ENCODE measurements at regions of chr12 and their contacts with region 1.

Region 1: GRCh38 chr12:27703710-27704452 is 6.8 kb upstream of the MRPS35 start:
- DNase-seq: peak; percentile 80
- H3K4me3 Mint-ChIP-seq: no peak overlapping the region
- H3K27ac Mint-ChIP-seq: no peak overlapping the region
- H3K4me1 Mint-ChIP-seq: peaks cover 2% of the 10 kb centered on the region
- H3K27me3 Mint-ChIP-seq: peaks cover 9% of the 10 kb centered on the region

Region 2: GRCh38 chr12:27383429-27384260 is 320.2 kb before region 1 on chr12:
- CTCF ChIA-PET with region 1: interaction called, 3 read pairs
- POLR2A ChIA-PET with region 1: no interaction called
- intact Hi-C with region 1: loop called (anchors 1 kb)
- DNase-seq: peak; percentile 78
- H3K4me3 Mint-ChIP-seq: no peak overlapping the region
- H3K27ac Mint-ChIP-seq: no peak overlapping the region
- H3K4me1 Mint-ChIP-seq: no peaks in the 10 kb centered on the region
- H3K27me3 Mint-ChIP-seq: no peaks in the 10 kb centered on the region

Region 3: DNA sequence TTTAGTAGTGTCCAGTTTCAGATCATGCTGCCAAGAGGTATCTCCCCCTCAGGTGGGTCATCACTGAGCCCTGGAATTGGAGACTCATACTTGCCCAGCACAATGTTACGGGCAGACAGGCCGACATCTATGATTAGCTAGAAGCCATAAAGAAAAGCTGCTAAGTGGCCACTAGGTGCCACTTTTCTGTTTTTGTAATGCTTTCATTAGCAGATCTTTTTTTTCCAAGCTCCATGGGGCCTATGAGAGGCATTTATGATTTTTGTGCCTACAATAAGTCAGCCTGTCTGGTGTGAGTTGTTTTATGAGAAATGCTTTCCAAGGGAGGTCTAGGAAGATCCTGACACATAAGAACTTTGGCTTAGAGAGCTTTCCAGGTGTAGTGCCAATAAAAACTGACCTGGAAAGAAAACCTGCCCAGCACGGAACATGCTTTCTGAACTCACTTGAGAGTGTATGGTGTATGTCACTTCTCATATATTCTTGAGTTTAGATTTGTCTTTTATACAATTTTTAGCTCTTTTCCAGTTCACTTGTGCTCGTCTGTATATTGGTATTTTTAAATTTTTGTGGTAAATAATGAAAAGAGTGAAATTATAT is 279.1 kb before region 1 on chr12:
- CTCF ChIA-PET with region 1: interaction called, 4 read pairs
- POLR2A ChIA-PET with region 1: no interaction called
- intact Hi-C with region 1: loop called (anchors 5 kb)
- DNase-seq: no peak
- H3K4me3 Mint-ChIP-seq: no peak overlapping the region
- H3K27ac Mint-ChIP-seq: no peak overlapping the region
- H3K4me1 Mint-ChIP-seq: peaks cover 2% of the 10 kb centered on the region
- H3K27me3 Mint-ChIP-seq: peaks cover 2% of the 10 kb centered on the region

Region 4: DNA sequence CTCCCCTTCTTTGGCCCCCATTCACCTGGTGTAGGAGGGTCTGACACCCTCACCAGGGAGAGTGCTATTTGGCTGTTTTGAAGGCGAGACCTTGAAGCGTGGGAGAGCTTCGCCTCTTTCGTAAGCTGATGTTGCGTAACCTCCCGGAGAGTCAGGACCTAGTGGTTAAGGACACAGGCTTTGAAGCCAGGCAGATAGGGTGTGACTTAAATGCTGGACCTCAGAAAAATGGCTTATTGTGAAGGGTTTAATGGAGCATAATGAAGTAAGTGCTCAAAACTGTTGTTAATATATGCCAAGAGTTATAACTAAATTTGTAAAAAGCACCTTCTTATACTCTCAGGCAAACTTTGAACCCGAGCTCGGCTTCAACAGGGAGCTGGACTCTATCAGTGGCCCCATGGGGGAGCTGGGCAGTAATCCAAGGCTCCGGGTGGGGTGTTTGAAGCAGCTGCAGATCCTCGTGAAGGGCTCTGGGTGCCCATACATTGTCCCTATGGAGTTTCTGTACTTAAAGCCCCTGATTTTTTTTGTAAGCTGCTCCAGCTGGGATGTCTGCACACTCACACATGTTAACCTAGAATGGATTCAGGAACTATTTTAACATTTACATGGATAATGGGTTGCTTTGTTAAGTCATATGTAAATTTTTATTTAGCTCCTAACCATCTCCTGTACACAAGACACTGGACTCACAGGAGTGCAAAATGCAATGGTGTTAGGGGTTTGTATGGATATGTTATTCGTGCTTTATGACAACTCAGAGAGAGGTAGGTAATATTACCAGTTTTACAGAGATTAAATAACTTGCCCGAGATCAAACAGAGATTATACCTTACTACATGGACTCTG is 153.9 kb before region 1 on chr12:
- CTCF ChIA-PET with region 1: no interaction called
- POLR2A ChIA-PET with region 1: no interaction called
- intact Hi-C with region 1: no loop called
- DNase-seq: no peak
- H3K4me3 Mint-ChIP-seq: no peak overlapping the region
- H3K27ac Mint-ChIP-seq: no peak overlapping the region
- H3K4me1 Mint-ChIP-seq: peaks cover 7% of the 10 kb centered on the region
- H3K27me3 Mint-ChIP-seq: peaks cover 4% of the 10 kb centered on the region

Region 5: DNA sequence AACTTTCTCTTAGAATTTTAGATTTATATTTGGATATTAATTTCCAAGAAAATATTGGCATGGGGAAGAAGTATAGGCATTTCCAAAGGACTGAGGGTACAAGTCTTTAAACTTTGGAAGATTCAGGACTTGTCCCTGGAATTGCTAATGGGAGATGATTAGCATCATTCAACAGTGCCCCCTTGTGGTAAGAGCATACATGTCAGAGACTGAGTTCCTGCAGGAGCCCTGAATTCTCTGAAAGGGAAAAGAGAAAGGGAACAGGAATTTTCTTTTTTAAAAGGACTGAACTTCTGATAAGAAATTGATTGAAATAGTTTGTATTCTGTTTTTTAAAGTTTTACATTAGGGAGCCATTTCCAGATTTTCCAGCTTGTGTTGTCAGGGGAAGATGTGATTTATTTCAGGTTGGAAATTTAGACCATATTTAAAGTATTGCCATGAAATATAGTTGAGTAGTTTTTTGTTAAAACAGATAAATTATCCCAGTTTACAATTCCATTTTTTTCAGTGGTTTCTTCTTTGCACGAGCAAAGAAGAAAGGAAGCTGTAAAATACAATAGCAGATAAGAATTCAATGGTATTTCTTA is 51.6 kb before region 1 on chr12:
- CTCF ChIA-PET with region 1: interaction called, 3 read pairs
- POLR2A ChIA-PET with region 1: no interaction called
- intact Hi-C with region 1: loop called (anchors 5 kb)
- DNase-seq: peak; percentile 14
- H3K4me3 Mint-ChIP-seq: no peak overlapping the region
- H3K27ac Mint-ChIP-seq: no peak overlapping the region
- H3K4me1 Mint-ChIP-seq: peaks cover 2% of the 10 kb centered on the region
- H3K27me3 Mint-ChIP-seq: peaks cover 2% of the 10 kb centered on the region

Region 6: DNA sequence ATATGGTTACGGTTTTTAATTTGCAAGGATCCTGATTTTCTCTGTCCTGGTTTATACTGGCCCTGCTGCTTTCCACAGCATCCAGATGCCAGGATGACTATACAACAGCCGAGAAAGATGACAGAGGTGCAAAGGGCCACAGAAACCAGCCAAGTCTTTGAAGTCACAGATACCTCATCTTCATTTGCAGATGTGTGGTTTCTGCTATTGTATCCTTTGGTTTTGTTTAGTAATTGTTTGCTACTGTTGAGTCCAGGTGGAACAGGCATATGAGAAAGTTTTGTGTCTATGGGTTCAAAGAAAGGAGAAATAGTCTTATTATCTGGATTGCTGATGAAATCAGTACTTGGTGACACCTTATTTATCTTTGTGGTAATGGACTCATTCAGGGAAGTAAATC is 58.9 kb after region 1 on chr12:
- CTCF ChIA-PET with region 1: no interaction called
- POLR2A ChIA-PET with region 1: no interaction called
- intact Hi-C with region 1: no loop called
- DNase-seq: peak; percentile 32
- H3K4me3 Mint-ChIP-seq: no peak overlapping the region
- H3K27ac Mint-ChIP-seq: no peak overlapping the region
- H3K4me1 Mint-ChIP-seq: peaks cover 8% of the 10 kb centered on the region
- H3K27me3 Mint-ChIP-seq: no peaks in the 10 kb centered on the region

Measured in activated CD4-positive, alpha-beta memory T cell treated with anti-CD3 and anti-CD28 coated beads for 36 hours (primary cell).